ENCODE measurements at regions of chr12 and their contacts with region 1.

Region 1: GRCh38 chr12:56117778-56118687 is at the start of gene ZC3H10:
- DNase-seq: peak; percentile 96 to 99 (median 98)
- H3K4me3 ChIP-seq: peak within 1 kb of the TSS; percentile 99
- H3K4me3 Mint-ChIP-seq: peak within 1 kb of the TSS; percentile 95 to 99 (median 98)
- H3K27ac ChIP-seq: peak within 1 kb of the TSS; percentile 89
- H3K27ac Mint-ChIP-seq: peak within 1 kb of the TSS; percentile 94 to 100 (median 99)
- H3K4me1 ChIP-seq: peaks cover 34% of the 10 kb centered on the region
- H3K4me1 Mint-ChIP-seq: peaks cover 22 to 44% (median 31%) of the 10 kb centered on the region in 4 donors
- H3K27me3 ChIP-seq: no peaks in the 10 kb centered on the region
- H3K27me3 Mint-ChIP-seq: no peaks in the 10 kb centered on the region
- total RNA-seq, gene ZC3H10: 16.3 to 19.6 TPM

Region 2: GRCh38 chr12:55738123-55739024 is 379.7 kb before region 1 on chr12:
- CTCF ChIA-PET with region 1: interaction called, 19 read pairs
- POLR2A ChIA-PET with region 1: interaction called, 16 read pairs
- intact Hi-C with region 1: loop called (anchors 2 kb)
- DNase-seq: peak; percentile 79 to 87 (median 83)
- H3K4me3 ChIP-seq: peak overlapping the region; percentile 39 to 75
- H3K4me3 Mint-ChIP-seq: peak overlapping the region; percentile 87 to 95 (median 90)
- H3K27ac ChIP-seq: peak overlapping the region; percentile 76
- H3K27ac Mint-ChIP-seq: peak overlapping the region; percentile 82 to 97 (median 96)
- H3K4me1 ChIP-seq: peaks cover 19% of the 10 kb centered on the region
- H3K4me1 Mint-ChIP-seq: peaks cover 21 to 38% (median 26%) of the 10 kb centered on the region in 4 donors
- H3K27me3 ChIP-seq: no peaks in the 10 kb centered on the region
- H3K27me3 Mint-ChIP-seq: no peaks in the 10 kb centered on the region

Region 3: DNA sequence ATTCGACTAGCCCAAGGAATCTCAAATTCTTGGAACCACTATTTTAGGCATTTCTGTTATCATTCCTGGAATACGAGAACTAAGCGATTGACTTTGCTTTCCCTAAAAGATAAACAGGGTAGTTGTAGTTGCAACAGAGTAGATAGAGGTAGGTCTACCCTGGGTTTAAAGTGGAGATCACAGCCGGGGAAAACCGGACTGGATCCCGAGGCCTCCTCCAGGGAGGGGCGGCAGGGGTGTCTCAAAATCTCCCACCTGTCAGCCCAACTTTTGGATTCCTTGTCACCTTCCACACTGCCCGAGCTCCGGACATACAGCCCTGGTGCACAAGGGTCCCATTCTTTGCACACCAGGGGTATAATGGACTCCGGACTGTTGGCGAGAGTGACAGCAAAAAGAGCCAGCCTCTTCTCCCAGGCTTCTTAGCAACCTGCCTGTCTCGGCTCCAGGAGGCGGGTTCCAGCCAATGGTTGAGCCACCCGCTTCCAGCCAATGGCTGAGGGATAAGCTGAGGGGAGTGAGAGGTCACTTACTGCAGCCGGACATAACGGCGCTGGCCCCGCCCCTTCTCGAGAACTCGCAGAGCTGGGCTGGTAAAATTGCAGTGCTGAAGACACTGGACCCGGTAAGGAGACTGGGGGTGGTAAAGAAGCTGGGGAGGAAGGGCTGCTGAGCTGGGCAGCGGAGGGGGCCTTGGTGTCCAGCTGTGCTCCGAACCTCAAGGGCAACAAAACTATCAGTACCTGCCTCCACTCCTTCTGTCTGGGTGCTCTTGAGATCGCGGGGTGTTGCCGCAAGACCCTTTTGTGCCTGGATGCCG is 121.1 kb before region 1 on chr12 and contains the start of gene SUOX:
- CTCF ChIA-PET with region 1: interaction called, 3 read pairs
- POLR2A ChIA-PET with region 1: interaction called, 3 read pairs
- intact Hi-C with region 1: loop called (anchors 5 kb)
- DNase-seq: peak in 1 of 5 donors; percentile 6
- H3K4me3 ChIP-seq: peak within 1 kb of the TSS in 1 of 2 donors; percentile 18
- H3K4me3 Mint-ChIP-seq: peak within 1 kb of the TSS in 6 of 8 donors; percentile 2 to 54 (median 46)
- H3K27ac ChIP-seq: no peak within 1 kb of the TSS
- H3K27ac Mint-ChIP-seq: peak within 1 kb of the TSS in 6 of 7 donors; percentile 14 to 92 (median 62)
- H3K4me1 ChIP-seq: peaks cover 16% of the 10 kb centered on the region
- H3K4me1 Mint-ChIP-seq: peaks cover 10 to 23% (median 12%) of the 10 kb centered on the region in 4 donors
- H3K27me3 ChIP-seq: no peaks in the 10 kb centered on the region
- H3K27me3 Mint-ChIP-seq: peaks cover 0 to 1% of the 10 kb centered on the region in 2 donors
- total RNA-seq, gene SUOX: 5.4 to 5.9 TPM

Region 4: GRCh38 chr12:56127888-56128669 is 10.0 kb after region 1 on chr12 and contains the start of gene ESYT1:
- CTCF ChIA-PET with region 1: interaction called, 41 read pairs
- POLR2A ChIA-PET with region 1: interaction called, 178 read pairs
- intact Hi-C with region 1: loop called (anchors 1 kb)
- DNase-seq: peak; percentile 96 to 100 (median 99)
- H3K4me3 ChIP-seq: peak within 1 kb of the TSS; percentile 81 to 96
- H3K4me3 Mint-ChIP-seq: peak within 1 kb of the TSS; percentile 96 to 100 (median 98)
- H3K27ac ChIP-seq: peak within 1 kb of the TSS; percentile 82
- H3K27ac Mint-ChIP-seq: peak within 1 kb of the TSS; percentile 89 to 99 (median 98)
- H3K4me1 ChIP-seq: peaks cover 69% of the 10 kb centered on the region
- H3K4me1 Mint-ChIP-seq: peaks cover 46 to 84% (median 59%) of the 10 kb centered on the region in 4 donors
- H3K27me3 ChIP-seq: no peaks in the 10 kb centered on the region
- H3K27me3 Mint-ChIP-seq: no peaks in the 10 kb centered on the region
- total RNA-seq, gene ESYT1: 249 to 258 TPM

Region 5: DNA sequence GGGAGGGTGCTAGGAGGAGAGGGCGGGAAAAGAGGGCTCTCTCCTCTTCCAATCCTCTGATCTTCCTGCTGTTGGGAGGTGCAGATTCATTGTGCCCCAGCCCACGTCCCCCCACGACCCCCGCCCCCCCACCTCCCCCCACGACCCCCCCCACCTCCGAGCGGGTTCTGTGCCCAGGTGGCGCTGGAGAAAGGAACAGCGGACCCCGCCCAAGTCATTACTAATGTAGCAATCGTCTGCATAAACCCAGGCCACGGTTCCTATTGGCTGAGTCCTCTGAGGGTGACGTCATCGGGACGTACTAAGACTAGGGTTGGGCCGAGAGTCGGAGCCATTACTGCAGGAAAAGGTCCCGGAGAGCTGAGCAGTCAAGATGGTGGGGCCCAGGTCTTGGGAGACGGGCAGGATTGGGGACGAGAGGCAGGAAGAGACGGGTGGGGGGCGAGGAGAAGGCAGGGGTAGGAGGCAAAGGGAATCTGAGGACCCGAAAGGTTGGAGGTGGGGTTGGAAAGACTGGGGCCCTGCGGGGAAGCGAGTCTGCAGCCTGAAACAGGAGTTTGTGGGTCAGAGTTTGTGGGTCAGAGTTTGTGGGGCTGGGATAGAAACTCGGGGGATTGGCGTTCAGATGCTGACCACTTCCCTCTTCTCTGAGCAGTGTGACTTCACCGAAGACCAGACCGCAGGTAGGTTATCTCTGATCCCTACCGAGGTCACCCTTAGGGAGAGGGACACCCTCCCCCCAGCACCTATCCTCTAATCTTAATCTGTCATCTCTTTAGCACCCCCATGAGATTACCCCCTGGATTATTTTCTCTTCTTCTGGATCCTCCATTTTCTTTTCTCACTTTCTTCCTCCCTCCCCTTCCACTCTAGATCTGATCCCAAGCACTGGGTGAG is 40.2 kb after region 1 on chr12 and contains the start of gene MYL6:
- CTCF ChIA-PET with region 1: interaction called, 24 read pairs
- POLR2A ChIA-PET with region 1: interaction called, 85 read pairs
- intact Hi-C with region 1: no loop called
- DNase-seq: peak; percentile 88 to 98 (median 91)
- H3K4me3 ChIP-seq: peak within 1 kb of the TSS; percentile 86 to 89
- H3K4me3 Mint-ChIP-seq: peak within 1 kb of the TSS; percentile 93 to 100 (median 97)
- H3K27ac ChIP-seq: peak within 1 kb of the TSS; percentile 97
- H3K27ac Mint-ChIP-seq: peak within 1 kb of the TSS; percentile 96 to 100 (median 99)
- H3K4me1 ChIP-seq: peaks cover 40% of the 10 kb centered on the region
- H3K4me1 Mint-ChIP-seq: peaks cover 28 to 64% (median 37%) of the 10 kb centered on the region in 4 donors
- H3K27me3 ChIP-seq: no peaks in the 10 kb centered on the region
- H3K27me3 Mint-ChIP-seq: no peaks in the 10 kb centered on the region
- total RNA-seq, gene MYL6: 567 to 589 TPM

Region 6: GRCh38 chr12:56299853-56300643 is 182.0 kb after region 1 on chr12 and contains the start of gene CS:
- CTCF ChIA-PET with region 1: no interaction called
- POLR2A ChIA-PET with region 1: interaction called, 10 read pairs
- intact Hi-C with region 1: loop called (anchors 1 kb)
- DNase-seq: peak; percentile 98 to 99 (median 99)
- H3K4me3 ChIP-seq: peak within 1 kb of the TSS; percentile 79 to 97
- H3K4me3 Mint-ChIP-seq: peak within 1 kb of the TSS; percentile 90 to 97 (median 96)
- H3K27ac ChIP-seq: peak within 1 kb of the TSS; percentile 99
- H3K27ac Mint-ChIP-seq: peak within 1 kb of the TSS; percentile 95 to 99 (median 98)
- H3K4me1 ChIP-seq: peaks cover 57% of the 10 kb centered on the region
- H3K4me1 Mint-ChIP-seq: peaks cover 31 to 66% (median 50%) of the 10 kb centered on the region in 4 donors
- H3K27me3 ChIP-seq: no peaks in the 10 kb centered on the region
- H3K27me3 Mint-ChIP-seq: no peaks in the 10 kb centered on the region
- total RNA-seq, gene CS: 134 to 136 TPM

Region 7: GRCh38 chr12:56468216-56469006 is 350.4 kb after region 1 on chr12 and contains the start of gene SPRYD4:
- CTCF ChIA-PET with region 1: interaction called, 23 read pairs
- POLR2A ChIA-PET with region 1: interaction called, 11 read pairs
- intact Hi-C with region 1: loop called (anchors 1 kb)
- DNase-seq: peak; percentile 94 to 96 (median 95)
- H3K4me3 ChIP-seq: peak within 1 kb of the TSS; percentile 90 to 98
- H3K4me3 Mint-ChIP-seq: peak within 1 kb of the TSS; percentile 93 to 98 (median 96)
- H3K27ac ChIP-seq: peak within 1 kb of the TSS; percentile 73
- H3K27ac Mint-ChIP-seq: peak within 1 kb of the TSS; percentile 94 to 99 (median 98)
- H3K4me1 ChIP-seq: peaks cover 26% of the 10 kb centered on the region
- H3K4me1 Mint-ChIP-seq: peaks cover 14 to 44% (median 26%) of the 10 kb centered on the region in 4 donors
- H3K27me3 ChIP-seq: no peaks in the 10 kb centered on the region
- H3K27me3 Mint-ChIP-seq: no peaks in the 10 kb centered on the region
- total RNA-seq, gene SPRYD4: 6.5 to 6.9 TPM

Region 8: DNA sequence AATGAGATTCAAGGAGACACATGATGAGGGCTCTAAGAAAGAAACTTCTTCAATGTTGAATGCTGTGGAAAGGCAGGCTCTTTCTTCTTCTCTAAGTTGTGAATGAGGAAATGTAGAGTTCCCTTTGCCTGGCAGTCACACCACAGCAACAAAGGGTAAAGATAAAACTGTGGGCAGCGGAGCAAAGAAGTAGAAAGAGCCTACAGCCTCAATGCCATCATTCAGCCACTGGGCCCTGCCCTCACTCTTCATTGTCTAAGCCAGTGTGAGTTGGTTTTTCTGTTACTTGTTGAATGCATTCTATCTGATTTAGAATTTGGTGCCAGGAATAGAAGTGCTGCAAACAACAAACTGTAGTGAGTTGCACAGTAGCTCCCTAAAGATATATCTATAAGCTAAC is 804.0 kb after region 1 on chr12:
- CTCF ChIA-PET with region 1: no interaction called
- POLR2A ChIA-PET with region 1: no interaction called
- intact Hi-C with region 1: no loop called
- DNase-seq: no peak
- H3K4me3 ChIP-seq: no peak overlapping the region
- H3K4me3 Mint-ChIP-seq: no peak overlapping the region
- H3K27ac ChIP-seq: no peak overlapping the region
- H3K27ac Mint-ChIP-seq: no peak overlapping the region
- H3K4me1 ChIP-seq: no peaks in the 10 kb centered on the region
- H3K4me1 Mint-ChIP-seq: no peaks in the 10 kb centered on the region
- H3K27me3 ChIP-seq: no peaks in the 10 kb centered on the region
- H3K27me3 Mint-ChIP-seq: peaks cover 5 to 6% of the 10 kb centered on the region in 2 donors

Measured in CD4-positive, alpha-beta memory T cell (primary cell).